ENCODE measurements at regions of chr5 and their contacts with region 1.

Region 1: GRCh38 chr5:177209610-177210009 is 76.0 kb downstream of the NSD1 start:
- DNase-seq: no peak
- H3K4me3 Mint-ChIP-seq: no peak overlapping the region
- H3K27ac Mint-ChIP-seq: no peak overlapping the region
- H3K4me1 Mint-ChIP-seq: no peaks in the 10 kb centered on the region
- H3K27me3 Mint-ChIP-seq: no peaks in the 10 kb centered on the region

Region 2: DNA sequence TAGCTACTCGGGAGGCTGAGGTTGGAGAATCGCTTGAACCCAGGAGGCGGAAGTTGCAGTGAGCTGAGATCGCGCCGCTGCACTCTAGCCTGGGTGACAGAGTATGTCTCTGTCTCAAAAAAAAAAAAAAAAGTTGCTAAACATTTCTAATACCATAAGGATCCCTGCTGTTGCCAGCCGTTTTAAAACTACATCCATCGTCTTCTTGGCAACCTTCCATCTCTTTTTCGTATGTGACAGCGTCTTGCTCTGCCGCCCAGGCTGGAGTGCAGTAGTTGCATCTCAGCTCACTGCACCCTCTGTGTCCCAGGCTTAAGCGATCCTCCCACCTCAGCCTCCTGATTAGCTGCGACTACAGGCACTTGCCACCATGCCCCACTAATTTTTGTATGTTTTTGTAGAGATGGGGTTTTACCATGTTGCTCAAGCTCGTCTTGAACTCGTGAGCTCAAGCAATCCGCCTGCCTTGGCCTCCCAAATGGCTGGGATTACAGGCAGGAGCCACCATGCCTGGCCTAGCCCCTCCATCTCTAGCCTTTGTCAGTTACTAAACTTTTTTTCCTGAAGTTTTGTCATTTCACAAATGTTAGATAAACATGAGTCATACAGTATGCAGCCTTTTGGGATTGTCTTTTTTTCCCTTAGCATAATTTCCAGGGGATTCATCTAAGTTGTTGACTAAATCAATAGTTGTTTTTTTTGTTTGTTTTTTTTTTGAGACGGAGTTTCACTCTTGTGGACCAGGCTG is 62.5 kb before region 1 on chr5:
- CTCF ChIA-PET with region 1: no interaction called
- intact Hi-C with region 1: loop called (anchors 10 kb)
- DNase-seq: no peak
- H3K4me3 Mint-ChIP-seq: no peak overlapping the region
- H3K27ac Mint-ChIP-seq: no peak overlapping the region
- H3K4me1 Mint-ChIP-seq: peaks cover 12% of the 10 kb centered on the region
- H3K27me3 Mint-ChIP-seq: no peaks in the 10 kb centered on the region